Left lung (tissue), 14 donors: ENCODE measurements at regions of chr2 and their contacts with region 1.

Region 1: DNA sequence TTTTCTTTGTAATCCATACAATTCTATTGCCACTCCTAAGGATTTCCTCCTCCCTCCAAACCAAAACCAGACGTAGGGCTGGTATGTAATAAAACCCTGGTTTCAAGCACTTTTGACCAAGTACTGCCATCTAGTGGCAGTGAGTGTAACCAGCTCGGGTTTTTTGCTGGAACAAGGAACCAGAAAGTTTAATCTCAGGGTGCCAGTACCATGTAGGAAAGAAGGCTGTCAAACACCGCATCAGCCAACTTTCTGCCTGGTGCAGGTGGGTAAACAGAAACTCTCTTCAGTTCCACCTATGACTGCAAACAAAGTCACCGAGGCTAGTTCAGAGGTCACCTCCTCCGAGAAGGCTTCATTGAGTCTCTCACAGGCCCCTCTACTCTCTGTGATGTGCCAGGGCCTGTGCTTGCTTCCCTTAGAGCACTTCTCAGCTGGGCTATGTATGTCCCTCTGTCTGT is 10.2 kb upstream of the THNSL2 start:
- DNase-seq: peak in 2 of 4 donors; percentile 56 to 75
- ATAC-seq: peak; percentile 96
- H3K4me3 ChIP-seq: no peak overlapping the region
- H3K27ac ChIP-seq: no peak overlapping the region
- H3K4me1 ChIP-seq: no peaks in the 10 kb centered on the region
- H3K27me3 ChIP-seq: no peaks in the 10 kb centered on the region
- CTCF ChIP-seq: peak; percentile 72 to 74

Region 2: DNA sequence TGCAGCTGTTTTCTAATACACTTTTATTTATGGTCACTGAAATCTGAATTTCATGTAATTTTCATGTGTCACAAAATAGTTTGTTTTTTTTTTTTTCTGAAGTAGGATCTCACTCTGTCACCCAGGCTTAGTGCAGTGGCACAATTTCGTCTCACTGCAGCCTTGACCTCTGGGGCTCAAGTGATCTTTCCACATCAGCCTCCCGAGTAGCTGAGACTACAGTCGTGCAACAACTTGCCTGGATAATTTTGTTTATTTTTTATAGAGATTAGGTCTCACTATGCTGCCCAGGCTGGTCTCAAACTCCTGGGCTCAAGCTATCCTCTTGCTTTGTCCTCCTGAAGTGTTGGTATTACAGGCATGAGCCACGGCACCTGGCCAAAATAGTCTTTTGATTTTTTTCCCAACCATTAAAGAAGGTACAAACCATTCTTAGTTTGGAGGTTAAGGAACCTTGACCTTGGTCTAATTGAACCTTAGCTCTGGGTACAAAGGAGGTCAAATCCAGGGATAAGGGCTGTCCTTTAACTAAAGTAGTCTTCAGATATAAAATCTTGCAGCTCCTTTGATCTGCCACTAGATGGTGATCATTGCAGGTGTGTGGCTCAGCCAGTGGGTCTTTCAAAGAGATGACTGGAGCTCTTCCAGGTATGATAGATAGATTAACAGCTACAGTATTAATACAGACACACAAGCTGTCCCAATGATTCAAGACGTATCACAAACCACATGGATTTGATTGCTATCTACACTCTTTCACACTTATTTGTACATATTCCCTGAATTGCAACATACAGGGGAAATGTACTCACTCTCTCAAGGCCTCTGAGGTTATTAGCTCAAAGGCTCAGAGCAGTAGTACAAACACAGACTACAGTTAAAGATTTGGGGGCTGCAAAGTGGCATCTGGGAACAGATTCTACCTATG is 99.7 kb before region 1 on chr2:
- intact Hi-C with region 1: loop called in 1 of 2 experiments (anchors 5 kb)
- DNase-seq: peak in 1 of 4 donors; percentile 31
- ATAC-seq: peak; percentile 64
- H3K4me3 ChIP-seq: no peak overlapping the region
- H3K27ac ChIP-seq: no peak overlapping the region
- H3K4me1 ChIP-seq: peaks cover 0 to 13% of the 10 kb centered on the region in 2 donors
- H3K27me3 ChIP-seq: no peaks in the 10 kb centered on the region
- CTCF ChIP-seq: peak; percentile 61 to 76

Region 3: GRCh38 chr2:88416016-88416680 is 256.2 kb after region 1 on chr2:
- intact Hi-C with region 1: no loop called
- DNase-seq: no peak
- ATAC-seq: no peak
- H3K4me3 ChIP-seq: no peak overlapping the region
- H3K27ac ChIP-seq: no peak overlapping the region
- H3K4me1 ChIP-seq: no peaks in the 10 kb centered on the region
- H3K27me3 ChIP-seq: peaks cover 0 to 22% of the 10 kb centered on the region in 2 donors
- CTCF ChIP-seq: no peak

Region 4: GRCh38 chr2:88471083-88471942 is 311.3 kb after region 1 on chr2:
- intact Hi-C with region 1: no loop called
- DNase-seq: no peak
- ATAC-seq: peak; percentile 88
- H3K4me3 ChIP-seq: no peak overlapping the region
- H3K27ac ChIP-seq: no peak overlapping the region
- H3K4me1 ChIP-seq: no peaks in the 10 kb centered on the region
- H3K27me3 ChIP-seq: peaks cover 0 to 19% of the 10 kb centered on the region in 2 donors
- CTCF ChIP-seq: no peak